GM13976 (cell line): ENCODE measurements at regions of chr7 and their contacts with region 1.

Region 1: DNA sequence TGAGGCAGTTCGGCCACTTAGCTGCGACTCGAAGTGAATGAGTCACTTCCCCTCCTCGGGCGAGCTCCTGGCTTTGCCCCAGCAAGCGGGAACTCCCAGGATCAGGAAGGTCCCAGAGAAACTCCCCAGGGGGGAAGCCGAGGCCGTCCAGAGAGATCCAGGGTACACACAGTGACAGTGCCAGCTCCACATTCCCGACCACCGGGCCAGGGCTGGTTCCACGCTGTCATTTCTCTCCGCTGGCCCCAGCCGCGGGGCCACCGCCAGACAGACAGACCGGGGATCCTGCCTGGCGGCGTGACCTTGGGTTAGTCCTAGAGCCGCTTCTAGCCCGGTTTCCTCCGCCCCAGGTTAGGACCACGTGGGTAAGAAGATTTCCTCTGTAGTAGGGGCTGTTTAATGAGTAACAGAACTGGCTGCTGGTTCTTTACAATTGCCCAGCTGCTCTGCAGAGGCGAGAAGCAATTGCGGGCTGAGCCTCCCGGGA is 463 bp upstream of the UPP1 start:
- DNase-seq: peak; percentile 58
- CTCF ChIP-seq: no peak

Region 2: DNA sequence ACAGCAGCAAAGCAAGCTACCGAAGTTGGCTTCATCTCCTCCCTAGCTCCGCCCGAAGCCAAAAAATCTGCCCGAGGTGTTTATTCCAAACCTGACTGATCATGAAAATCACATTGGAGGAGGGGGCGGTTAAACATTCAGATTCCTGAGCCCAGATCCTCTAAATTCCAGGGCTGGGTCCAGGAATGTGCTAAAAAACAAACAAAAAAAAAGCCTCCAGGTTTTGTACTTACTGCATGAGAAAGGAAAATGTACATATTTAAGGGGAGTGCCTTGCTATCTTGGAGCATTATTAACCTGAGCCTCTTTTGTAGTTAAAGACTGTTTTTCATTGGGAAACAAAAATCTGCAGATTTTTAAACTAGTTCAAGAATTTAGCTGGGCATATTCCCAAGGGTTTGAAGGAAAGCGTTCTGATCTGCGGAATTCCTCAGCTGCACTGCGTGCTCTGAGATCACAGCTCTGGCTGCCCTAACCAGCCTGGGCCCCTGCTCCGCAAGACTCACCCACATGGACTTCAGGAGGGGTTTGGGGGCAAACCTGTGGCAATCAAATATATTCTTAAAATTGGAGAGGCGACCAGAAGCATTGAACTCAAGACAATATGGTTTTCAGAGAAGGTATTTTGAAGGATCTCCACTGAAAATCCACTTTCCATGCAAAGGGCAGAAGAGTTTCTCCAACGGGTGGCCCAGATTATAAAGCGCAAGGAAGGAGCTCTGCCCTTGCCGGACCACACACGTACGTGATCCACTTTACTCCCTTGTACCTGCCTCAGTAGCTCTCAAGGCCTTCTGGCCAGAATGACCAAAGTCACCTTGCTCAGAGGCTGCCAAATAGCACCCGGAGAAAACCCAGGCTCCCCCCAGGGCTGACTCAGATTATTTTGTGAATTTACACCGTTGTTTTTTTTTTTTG is 496.7 kb before region 1 on chr7:
- in situ Hi-C with region 1: no loop called
- DNase-seq: no peak
- CTCF ChIP-seq: no peak

Region 3: DNA sequence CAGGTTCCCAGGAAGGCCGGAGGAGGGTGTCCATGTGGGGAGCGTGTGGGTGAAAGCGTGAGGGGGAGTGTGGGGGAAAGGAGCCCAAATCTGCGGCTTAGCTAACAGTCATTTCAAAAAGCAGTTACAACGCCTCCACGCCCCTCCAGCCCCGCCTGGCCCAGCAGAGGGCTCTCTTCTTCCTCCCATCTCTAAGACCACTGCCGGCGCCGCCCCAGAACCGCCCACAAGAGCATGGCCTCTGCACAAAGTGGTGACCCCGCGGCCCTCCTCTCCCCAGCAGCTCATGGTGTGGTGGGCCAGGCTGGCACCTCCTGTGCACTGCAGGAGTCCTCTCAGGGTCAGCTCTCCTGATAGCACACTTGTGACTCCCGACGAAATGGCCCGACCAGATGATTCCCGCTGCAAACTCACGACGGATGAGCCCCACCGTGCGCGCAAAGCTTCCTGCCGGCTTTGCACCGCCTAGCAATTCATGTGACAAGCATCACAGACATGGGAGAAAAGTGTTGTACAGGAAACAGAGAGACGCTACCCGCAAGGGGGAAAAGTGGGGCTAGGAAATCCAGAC is 96.8 kb before region 1 on chr7:
- in situ Hi-C with region 1: loop called (anchors 5 kb)
- DNase-seq: peak; percentile 92
- CTCF ChIP-seq: peak; percentile 84

Region 4: DNA sequence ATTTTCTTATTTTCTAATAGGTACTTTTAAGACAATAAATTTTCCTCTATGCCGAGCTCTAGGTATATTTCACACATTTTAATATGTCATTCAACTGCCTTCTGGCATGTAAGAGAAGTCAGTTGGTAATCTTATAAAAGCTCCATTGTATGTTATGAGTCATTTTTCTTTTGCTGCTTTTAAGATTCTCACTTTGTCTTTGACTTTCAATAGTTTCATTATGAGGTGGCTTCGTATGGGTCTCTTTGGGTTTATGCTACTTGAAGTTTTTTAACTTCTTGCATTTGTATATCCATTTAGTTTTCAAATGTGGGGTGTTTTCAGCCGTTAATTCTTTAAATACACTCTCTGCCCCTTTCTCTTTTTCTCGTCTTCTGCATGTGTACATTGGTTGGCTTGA is 163.2 kb after region 1 on chr7:
- in situ Hi-C with region 1: loop called (anchors 25 kb)
- DNase-seq: peak; percentile 38
- CTCF ChIP-seq: no peak